Activated CD4-positive, alpha-beta memory T cell treated with anti-CD3 and anti-CD28 coated beads, Interleukin-2, amount 10 ng/mL, durations not matched to agents 7 days and 5 days (primary cell): ENCODE measurements at regions of chr6 and their contacts with region 1.

Region 1: GRCh38 chr6:160013987-160014868 is 45.3 kb downstream of the IGF2R start:
- DNase-seq: peak; percentile 39
- H3K4me3 Mint-ChIP-seq: peak overlapping the region; percentile 3
- H3K27ac Mint-ChIP-seq: peak overlapping the region; percentile 91
- H3K4me1 Mint-ChIP-seq: peaks cover 57% of the 10 kb centered on the region
- H3K27me3 Mint-ChIP-seq: no peaks in the 10 kb centered on the region

Region 2: DNA sequence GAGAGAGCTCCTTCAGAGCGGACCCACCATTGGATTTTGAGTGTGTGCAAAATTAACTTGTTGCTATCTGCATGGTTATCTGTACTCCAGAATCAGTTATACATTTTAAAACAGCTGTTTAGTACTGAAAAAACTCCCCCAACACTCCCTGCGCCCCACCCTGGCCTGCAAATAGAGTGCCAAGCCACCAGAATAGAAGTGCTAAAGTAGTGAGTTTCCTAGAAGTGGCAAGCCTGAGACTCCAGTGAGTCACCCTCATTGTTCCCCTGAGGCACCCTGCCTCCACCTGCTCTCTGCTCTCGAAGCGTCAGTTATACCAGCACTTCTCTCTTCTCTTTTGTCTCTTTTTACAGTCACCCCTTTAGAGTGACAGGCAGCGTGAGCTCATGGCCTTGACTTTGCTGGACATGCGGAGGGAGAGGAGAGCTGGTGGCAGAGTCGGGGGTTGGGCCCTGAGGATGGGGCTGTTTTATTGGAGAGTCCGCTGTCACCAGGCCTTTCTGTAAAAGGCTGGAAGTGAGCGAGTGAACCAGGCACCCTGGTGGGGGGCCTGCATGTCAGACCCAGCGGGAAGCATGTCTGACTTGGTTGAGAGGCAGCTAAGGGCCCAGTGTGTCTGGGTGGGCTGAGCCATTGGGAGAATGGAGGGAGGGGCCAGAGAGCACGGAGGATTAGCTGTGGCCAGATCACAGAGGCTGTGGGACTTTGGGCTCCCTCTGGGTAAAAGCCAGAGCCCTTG is 34.9 kb before region 1 on chr6:
- CTCF ChIA-PET with region 1: interaction called, 14 read pairs
- POLR2A ChIA-PET with region 1: interaction called, 49 read pairs
- DNase-seq: peak; percentile 74
- H3K4me3 Mint-ChIP-seq: peak overlapping the region; percentile 69
- H3K27ac Mint-ChIP-seq: peak overlapping the region; percentile 95
- H3K4me1 Mint-ChIP-seq: peaks cover 95% of the 10 kb centered on the region
- H3K27me3 Mint-ChIP-seq: no peaks in the 10 kb centered on the region

Region 3: GRCh38 chr6:160057080-160057479 is 42.9 kb after region 1 on chr6:
- CTCF ChIA-PET with region 1: no interaction called
- POLR2A ChIA-PET with region 1: no interaction called
- DNase-seq: no peak
- H3K4me3 Mint-ChIP-seq: no peak overlapping the region
- H3K27ac Mint-ChIP-seq: peak overlapping the region; percentile 25
- H3K4me1 Mint-ChIP-seq: peaks cover 8% of the 10 kb centered on the region
- H3K27me3 Mint-ChIP-seq: no peaks in the 10 kb centered on the region